ENCODE measurements at regions of chr17 and their contacts with region 1.

Region 1: GRCh38 chr17:75749545-75750389 is 15.2 kb downstream of the GALK1 start:
- DNase-seq: peak; percentile 84 to 93 (median 91)
- H3K4me3 ChIP-seq: no peak overlapping the region
- H3K27ac ChIP-seq: no peak overlapping the region
- H3K4me1 ChIP-seq: peaks cover 4% of the 10 kb centered on the region
- H3K27me3 ChIP-seq: no peaks in the 10 kb centered on the region
- CTCF ChIP-seq: peak; percentile 91 to 94 (median 92)
- EP300 ChIP-seq: no peak
- POLR2A ChIP-seq: no peak

Region 2: GRCh38 chr17:75632863-75633485 is 116.8 kb before region 1 on chr17 and contains the start of gene SMIM5:
- intact Hi-C with region 1: loop called in 2 of 4 experiments (anchors 5 kb)
- DNase-seq: peak; percentile 90 to 92 (median 91)
- H3K4me3 ChIP-seq: peak within 1 kb of the TSS; percentile 1
- H3K27ac ChIP-seq: peak within 1 kb of the TSS; percentile 49 to 80
- H3K4me1 ChIP-seq: peaks cover 12% of the 10 kb centered on the region
- H3K27me3 ChIP-seq: no peaks in the 10 kb centered on the region
- CTCF ChIP-seq: peak; percentile 84 to 98 (median 85)
- EP300 ChIP-seq: no peak
- POLR2A ChIP-seq: no peak
- total RNA-seq, gene SMIM5: 0.51 to 7.9 (median 1.7) TPM

Region 3: GRCh38 chr17:75679706-75680442 is 69.9 kb before region 1 on chr17:
- intact Hi-C with region 1: loop called in 2 of 4 experiments (anchors 5 kb)
- DNase-seq: no peak
- H3K4me3 ChIP-seq: no peak overlapping the region
- H3K27ac ChIP-seq: no peak overlapping the region
- H3K4me1 ChIP-seq: no peaks in the 10 kb centered on the region
- H3K27me3 ChIP-seq: no peaks in the 10 kb centered on the region
- CTCF ChIP-seq: no peak
- EP300 ChIP-seq: no peak
- POLR2A ChIP-seq: no peak

Region 4: GRCh38 chr17:76027159-76027839 is 277.5 kb after region 1 on chr17 and contains the start of gene EVPL:
- intact Hi-C with region 1: no loop called
- DNase-seq: no peak
- H3K4me3 ChIP-seq: peak within 1 kb of the TSS; percentile 18
- H3K27ac ChIP-seq: no peak within 1 kb of the TSS
- H3K4me1 ChIP-seq: no peaks in the 10 kb centered on the region
- H3K27me3 ChIP-seq: no peaks in the 10 kb centered on the region
- CTCF ChIP-seq: no peak
- EP300 ChIP-seq: no peak
- POLR2A ChIP-seq: no peak
- total RNA-seq, gene EVPL: 0.33 to 7.2 (median 1.0) TPM

Measured in ovary (tissue), 10 donors.